A673 (cell line): ENCODE measurements at regions of chr2 and their contacts with region 1.

Region 1: GRCh38 chr2:234169187-234169570 is 118.7 kb downstream of the SPP2 start:
- DNase-seq: peak; percentile 57
- H3K4me3 ChIP-seq: no peak overlapping the region
- H3K27ac ChIP-seq: no peak overlapping the region
- H3K4me1 ChIP-seq: no peaks in the 10 kb centered on the region
- H3K27me3 ChIP-seq: no peaks in the 10 kb centered on the region
- CTCF ChIP-seq: no peak

Region 2: DNA sequence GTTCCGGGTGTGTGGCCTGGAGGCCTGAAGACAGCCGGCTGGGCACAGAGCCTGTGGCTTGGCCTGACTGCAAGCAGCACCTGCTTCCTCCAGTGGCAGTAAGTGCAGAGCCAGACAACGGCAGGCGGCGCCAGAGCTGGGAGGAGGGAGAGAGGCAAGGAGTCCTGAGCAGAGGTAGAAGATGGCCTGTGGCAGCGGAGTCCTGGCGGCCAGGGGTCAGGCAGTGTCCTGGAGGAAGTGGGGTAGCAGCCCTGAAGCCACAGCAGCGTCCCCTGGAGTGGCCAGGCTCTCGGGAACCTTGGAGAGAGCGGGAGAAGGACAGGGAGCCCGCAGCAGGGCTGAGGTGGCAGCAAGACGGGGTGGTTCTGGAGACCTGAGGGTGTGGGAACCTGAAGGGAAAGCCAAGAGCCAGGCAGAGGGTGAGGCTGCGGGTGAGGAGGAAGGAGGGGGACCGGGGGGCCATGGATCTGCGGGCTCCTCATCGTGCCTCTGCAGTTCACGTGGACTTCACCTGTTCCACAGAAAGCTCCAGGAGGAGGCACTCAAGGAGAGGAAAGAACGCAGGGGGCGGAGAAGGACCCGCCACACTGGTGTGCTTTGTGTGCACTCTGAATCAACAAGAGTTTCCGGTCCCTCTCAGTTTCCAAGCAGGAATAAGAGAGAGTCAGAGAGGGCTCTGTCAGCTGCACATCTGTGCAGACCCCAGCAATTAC is 688.5 kb before region 1 on chr2:
- CTCF ChIA-PET with region 1: no interaction called
- POLR2A ChIA-PET with region 1: interaction called, 10 read pairs
- intact Hi-C with region 1: no loop called
- DNase-seq: no peak
- H3K4me3 ChIP-seq: no peak overlapping the region
- H3K27ac ChIP-seq: no peak overlapping the region
- H3K4me1 ChIP-seq: no peaks in the 10 kb centered on the region
- H3K27me3 ChIP-seq: no peaks in the 10 kb centered on the region
- CTCF ChIP-seq: no peak